Heart left ventricle (tissue), 16 donors: ENCODE measurements at regions of chr3 and their contacts with region 1.

Region 1: DNA sequence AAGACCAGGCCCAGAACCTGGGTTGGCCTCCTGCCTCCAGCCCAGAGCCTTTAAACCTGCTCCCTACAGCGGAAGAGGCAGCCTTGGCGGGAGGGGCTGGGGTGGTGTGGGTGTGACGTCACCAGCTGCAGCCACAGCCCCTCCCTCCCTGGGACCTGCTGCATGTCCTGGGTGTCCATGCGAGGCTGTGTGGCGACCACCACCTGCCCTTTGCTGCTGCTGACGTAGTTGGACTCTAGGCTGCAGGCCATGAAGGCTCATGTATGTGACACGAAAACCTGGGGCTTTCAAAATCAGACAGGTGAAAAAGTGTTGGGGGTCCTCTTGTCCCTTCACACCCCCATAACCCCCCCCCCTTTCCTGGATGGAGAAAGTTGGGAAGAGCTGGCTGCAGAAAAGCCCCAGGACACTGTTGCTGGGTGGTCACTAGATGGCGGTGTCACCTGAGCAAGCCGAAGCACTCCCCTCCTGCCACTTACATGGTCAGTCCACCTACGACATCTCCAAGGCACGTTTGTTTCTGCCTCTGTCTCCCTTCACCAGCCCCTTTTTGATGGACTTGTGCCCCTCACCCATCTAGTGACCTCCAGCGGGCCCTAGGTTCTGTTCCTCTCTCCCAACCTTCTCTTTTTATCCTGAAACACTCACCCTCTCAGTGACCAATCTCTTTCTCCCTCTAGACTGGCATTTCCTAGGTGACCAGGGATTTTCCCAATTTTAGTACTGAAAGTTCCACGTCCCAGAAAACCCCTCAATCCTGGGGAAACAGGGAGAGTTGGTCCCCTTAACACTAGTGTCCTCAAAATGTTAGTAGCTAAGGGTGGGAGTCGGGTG is 35.2 kb downstream of the SLC6A20 start:
- DNase-seq: peak in 4 of 5 donors; percentile 38 to 52 (median 45)
- ATAC-seq: peak; percentile 74 to 87 (median 82)
- H3K4me3 ChIP-seq: no peak overlapping the region
- H3K27ac ChIP-seq: no peak overlapping the region
- H3K4me1 ChIP-seq: no peaks in the 10 kb centered on the region
- H3K27me3 ChIP-seq: peaks cover 0 to 27% (median 0%) of the 10 kb centered on the region in 9 donors
- CTCF ChIP-seq: peak; percentile 48 to 74 (median 61)
- POLR2A ChIP-seq: no peak

Region 2: GRCh38 chr3:45826321-45826720 is 65.2 kb after region 1 on chr3:
- intact Hi-C with region 1: loop called in 6 of 10 experiments (anchors 2 to 5 kb)
- DNase-seq: no peak
- ATAC-seq: no peak
- H3K4me3 ChIP-seq: no peak overlapping the region
- H3K27ac ChIP-seq: no peak overlapping the region
- H3K4me1 ChIP-seq: no peaks in the 10 kb centered on the region
- H3K27me3 ChIP-seq: no peaks in the 10 kb centered on the region
- CTCF ChIP-seq: no peak
- POLR2A ChIP-seq: no peak

Region 3: DNA sequence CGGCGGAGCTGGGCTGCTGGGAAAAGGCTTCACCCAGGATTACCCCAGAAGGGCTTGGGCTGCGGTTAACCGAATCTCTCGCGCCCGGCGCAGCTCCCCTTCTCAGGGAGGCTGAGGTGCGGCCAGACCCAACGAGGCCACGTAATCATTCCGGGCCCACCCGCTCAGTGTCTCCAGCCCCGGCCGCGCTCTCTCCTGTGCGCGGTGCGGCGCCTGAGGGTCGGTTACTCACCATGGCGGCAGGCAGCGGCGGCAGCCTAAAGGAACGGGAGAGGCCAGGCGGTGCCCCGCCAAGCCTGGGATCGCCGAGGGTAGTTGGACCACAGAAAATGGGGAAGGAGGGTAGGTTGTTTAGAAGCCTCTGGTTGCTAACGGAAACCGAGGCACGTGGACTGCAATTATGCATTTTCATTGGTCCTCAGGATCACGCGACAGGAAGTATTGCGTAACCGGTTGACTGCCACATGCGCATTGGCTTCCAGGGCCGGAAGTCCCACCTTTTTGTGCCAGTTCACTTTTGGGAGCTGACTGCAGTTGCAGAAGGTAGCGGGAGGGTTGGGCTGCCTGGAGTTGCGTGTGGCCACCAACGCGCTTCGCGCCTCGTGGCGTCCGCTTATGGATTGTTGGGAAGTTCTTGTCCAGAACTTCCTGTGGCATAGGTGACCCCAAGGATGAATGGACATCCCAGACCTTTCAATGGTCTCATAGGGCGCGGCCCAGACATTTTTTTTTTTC is 80.8 kb after region 1 on chr3 and contains the start of gene LZTFL1:
- intact Hi-C with region 1: loop called in 1 of 10 experiments (anchors 5 kb)
- DNase-seq: peak; percentile 90 to 95 (median 93)
- ATAC-seq: peak; percentile 94 to 99 (median 98)
- H3K4me3 ChIP-seq: peak within 1 kb of the TSS; percentile 67 to 98 (median 86)
- H3K27ac ChIP-seq: peak within 1 kb of the TSS in 7 of 12 donors; percentile 17 to 53 (median 38)
- H3K4me1 ChIP-seq: peaks cover 0 to 16% (median 8%) of the 10 kb centered on the region in 12 donors
- H3K27me3 ChIP-seq: no peaks in the 10 kb centered on the region
- CTCF ChIP-seq: no peak
- POLR2A ChIP-seq: peak in 1 of 2 donors; percentile 44
- total RNA-seq, gene LZTFL1: 6.7 to 13.0 (median 8.8) TPM

Region 4: DNA sequence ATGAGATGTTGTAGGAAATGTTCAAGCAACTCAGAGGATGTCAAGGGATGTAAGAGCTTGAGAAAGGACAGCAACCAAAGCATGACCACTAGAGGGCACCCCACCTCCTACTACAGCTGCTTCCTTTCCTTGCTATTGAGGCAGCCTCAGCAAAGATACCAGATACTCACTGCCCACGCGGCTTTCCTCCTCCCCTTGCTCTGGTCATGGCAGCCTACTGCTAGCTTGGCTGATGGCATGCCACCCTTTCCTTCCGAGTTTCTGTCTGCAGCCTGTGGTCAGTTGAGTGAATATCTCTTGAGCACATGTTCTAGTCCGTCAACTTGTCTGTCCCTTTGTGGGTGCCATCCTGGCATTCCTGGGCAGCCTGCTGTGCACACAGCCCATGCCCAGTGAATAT is 177.8 kb after region 1 on chr3:
- intact Hi-C with region 1: loop called in 2 of 10 experiments (anchors 5 to 10 kb)
- DNase-seq: peak; percentile 69 to 85 (median 78)
- ATAC-seq: peak; percentile 64 to 89 (median 88)
- H3K4me3 ChIP-seq: no peak overlapping the region
- H3K27ac ChIP-seq: peak overlapping the region in 1 of 12 donors; percentile 28
- H3K4me1 ChIP-seq: peaks cover 0 to 41% (median 16%) of the 10 kb centered on the region in 12 donors
- H3K27me3 ChIP-seq: no peaks in the 10 kb centered on the region
- CTCF ChIP-seq: peak; percentile 78 to 90 (median 86)
- POLR2A ChIP-seq: no peak

Region 5: GRCh38 chr3:46378426-46378942 is 617.4 kb after region 1 on chr3:
- intact Hi-C with region 1: loop called in 1 of 10 experiments (anchors 10 kb)
- DNase-seq: peak; percentile 42 to 79 (median 59)
- ATAC-seq: peak in 3 of 4 donors; percentile 50 to 78 (median 60)
- H3K4me3 ChIP-seq: no peak overlapping the region
- H3K27ac ChIP-seq: no peak overlapping the region
- H3K4me1 ChIP-seq: peaks cover 0 to 42% (median 3%) of the 10 kb centered on the region in 12 donors
- H3K27me3 ChIP-seq: peaks cover 0 to 9% (median 0%) of the 10 kb centered on the region in 9 donors
- CTCF ChIP-seq: peak; percentile 30 to 69 (median 54)
- POLR2A ChIP-seq: no peak